ENCODE measurements at regions of chr3 and their contacts with region 1.

Region 1: GRCh38 chr3:186425788-186426730 is 64.0 kb upstream of the DGKG start:
- DNase-seq: no peak
- H3K4me3 ChIP-seq: no peak overlapping the region
- H3K27ac ChIP-seq: peak overlapping the region; percentile 29 to 49
- H3K4me1 ChIP-seq: peaks cover 0 to 31% (median 11%) of the 10 kb centered on the region in 4 donors
- H3K27me3 ChIP-seq: no peaks in the 10 kb centered on the region
- CTCF ChIP-seq: peak; percentile 30 to 33

Region 2: DNA sequence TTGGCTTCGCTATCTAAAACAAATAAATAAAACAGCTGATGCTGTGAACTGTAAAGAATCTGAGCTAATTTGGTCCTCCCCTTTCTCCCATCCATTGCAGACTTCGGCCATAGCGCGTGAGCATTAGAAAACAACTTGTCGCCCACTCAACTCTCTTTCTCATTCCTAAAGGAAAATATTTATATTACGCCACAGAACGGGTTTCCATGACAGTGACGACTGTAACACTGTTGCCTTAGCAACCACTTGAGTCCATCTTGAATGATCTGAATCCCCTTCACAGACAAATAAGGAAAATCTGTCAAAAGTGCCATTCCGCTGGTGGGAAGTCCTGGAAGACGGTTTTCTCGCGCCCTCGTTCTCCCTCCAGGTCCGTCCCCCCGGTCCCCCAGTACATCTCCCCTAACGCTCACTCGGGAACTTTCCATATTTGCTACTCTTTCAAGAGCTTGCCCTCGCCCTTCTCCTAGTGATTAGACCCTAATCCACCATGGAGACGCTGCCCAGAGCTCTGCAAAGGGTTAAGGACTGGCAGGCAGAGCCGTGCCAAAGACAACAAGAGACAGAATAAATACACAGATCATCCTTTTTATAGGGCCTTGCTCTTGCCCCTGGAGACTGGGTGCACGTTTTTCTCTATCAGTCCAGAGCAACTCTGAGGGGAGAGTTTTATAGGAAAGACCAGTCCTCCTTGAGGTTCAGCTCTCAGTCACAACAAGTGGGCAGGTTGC is 67.6 kb after region 1 on chr3:
- intact Hi-C with region 1: loop called (anchors 10 kb)
- DNase-seq: no peak
- H3K4me3 ChIP-seq: peak overlapping the region in 1 of 2 donors; percentile 7
- H3K27ac ChIP-seq: peak overlapping the region; percentile 73 to 81
- H3K4me1 ChIP-seq: peaks cover 0 to 50% (median 25%) of the 10 kb centered on the region in 4 donors
- H3K27me3 ChIP-seq: no peaks in the 10 kb centered on the region
- CTCF ChIP-seq: no peak

Region 3: DNA sequence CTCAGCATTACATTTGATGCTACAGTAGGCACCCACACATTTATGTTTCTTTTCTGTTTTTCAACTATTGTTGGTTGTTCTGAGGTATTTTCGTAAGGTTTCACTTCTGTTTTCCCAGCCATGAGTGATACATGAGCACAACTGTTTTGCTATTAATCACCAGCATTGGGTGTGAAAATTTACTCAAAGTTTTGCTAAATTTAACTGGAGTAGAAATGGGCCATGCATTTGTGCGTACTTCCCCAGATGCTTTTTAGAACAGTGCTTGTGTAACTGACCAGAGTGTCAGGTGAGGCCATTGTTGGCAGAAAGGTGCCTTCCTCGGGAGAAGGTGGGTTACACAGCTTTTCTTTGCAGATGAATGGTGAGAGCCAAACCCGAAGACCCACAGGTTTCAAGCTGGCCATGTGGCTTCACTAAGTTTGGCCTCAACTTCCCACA is 574.7 kb after region 1 on chr3:
- intact Hi-C with region 1: no loop called
- DNase-seq: no peak
- H3K4me3 ChIP-seq: no peak overlapping the region
- H3K27ac ChIP-seq: no peak overlapping the region
- H3K4me1 ChIP-seq: peaks cover 0 to 44% (median 5%) of the 10 kb centered on the region in 4 donors
- H3K27me3 ChIP-seq: no peaks in the 10 kb centered on the region
- CTCF ChIP-seq: no peak

Measured in tibial artery (tissue), 4 donors.